Activated naive CD4-positive, alpha-beta T cell treated with anti-CD3 and anti-CD28 coated beads for 36 hours (primary cell): ENCODE measurements at regions of chr7 and their contacts with region 1.

Region 1: DNA sequence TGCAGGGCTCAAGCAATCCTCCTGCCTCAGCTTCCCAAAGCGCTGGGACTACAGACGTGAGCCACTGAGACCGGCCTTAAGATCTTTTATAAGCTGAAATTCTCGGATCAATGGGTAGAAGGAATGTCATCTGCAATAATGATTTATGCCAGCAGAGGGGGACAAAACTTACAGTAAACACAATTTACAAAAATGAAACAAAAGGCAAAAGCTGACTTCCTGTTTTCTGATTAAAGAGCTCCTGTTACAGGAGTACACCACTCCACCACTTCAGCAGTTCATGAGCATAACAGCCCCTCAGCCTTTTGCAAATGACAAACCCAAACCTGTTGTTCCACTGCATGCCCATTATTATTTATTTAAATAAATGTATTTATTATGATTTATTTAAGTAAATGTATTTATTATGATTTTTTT is 88.5 kb upstream of the ATP6V0A4 start:
- DNase-seq: peak; percentile 52
- H3K4me3 Mint-ChIP-seq: no peak overlapping the region
- H3K27ac Mint-ChIP-seq: peak overlapping the region; percentile 69
- H3K4me1 Mint-ChIP-seq: peaks cover 13% of the 10 kb centered on the region
- H3K27me3 Mint-ChIP-seq: no peaks in the 10 kb centered on the region

Region 2: GRCh38 chr7:138875794-138876193 is 10.7 kb before region 1 on chr7:
- CTCF ChIA-PET with region 1: interaction called, 15 read pairs
- intact Hi-C with region 1: no loop called
- DNase-seq: peak; percentile 81
- H3K4me3 Mint-ChIP-seq: no peak overlapping the region
- H3K27ac Mint-ChIP-seq: no peak overlapping the region
- H3K4me1 Mint-ChIP-seq: peaks cover 13% of the 10 kb centered on the region
- H3K27me3 Mint-ChIP-seq: no peaks in the 10 kb centered on the region

Region 3: DNA sequence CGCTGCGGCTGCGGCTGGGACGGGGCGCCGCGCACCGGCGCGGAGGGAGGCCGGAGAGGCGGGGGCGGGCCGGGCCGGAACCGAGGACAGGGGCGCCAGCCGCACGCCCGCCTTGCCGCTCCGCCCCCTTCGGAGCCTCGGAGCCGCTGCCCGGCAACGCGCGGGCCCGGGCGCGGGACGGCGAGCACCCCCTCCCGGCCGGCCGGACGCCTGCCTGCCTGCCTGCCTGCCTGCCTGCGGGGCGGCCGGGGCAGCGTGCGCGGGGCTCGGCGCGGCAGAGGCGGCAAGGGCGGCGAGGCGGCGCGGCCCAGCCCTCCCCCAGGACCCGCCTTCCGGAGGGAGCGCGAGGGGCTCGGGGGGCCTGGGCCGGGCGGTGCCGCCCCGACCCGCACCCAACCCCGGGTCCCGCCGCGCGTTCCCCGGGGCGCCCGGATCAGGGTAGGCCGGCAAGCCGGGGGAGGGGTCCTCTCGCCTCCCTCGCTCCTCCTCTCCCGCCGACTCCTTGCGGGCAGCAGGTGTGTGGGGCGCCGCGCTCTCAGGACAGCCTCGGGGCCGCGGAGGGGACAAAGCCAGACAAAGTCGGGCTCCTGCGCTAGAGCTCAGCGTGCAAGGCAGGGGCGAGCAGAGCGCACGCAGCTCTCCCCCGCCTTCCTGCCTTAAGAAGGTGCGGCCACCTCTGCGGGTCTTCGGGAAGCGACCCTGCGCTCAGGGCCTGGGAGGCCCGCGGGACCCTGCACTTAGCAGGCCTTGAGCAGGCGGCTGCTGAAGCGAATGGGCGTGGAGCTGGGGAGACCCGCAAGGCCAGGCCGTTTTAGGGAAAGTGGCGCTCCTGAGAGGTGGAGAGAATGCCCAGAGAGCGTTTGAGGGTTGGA is 95.1 kb after region 1 on chr7 and contains the start of gene KIAA1549:
- CTCF ChIA-PET with region 1: interaction called, 20 read pairs
- intact Hi-C with region 1: loop called (anchors 1 kb)
- DNase-seq: peak; percentile 59
- H3K4me3 Mint-ChIP-seq: peak within 1 kb of the TSS; percentile 80
- H3K27ac Mint-ChIP-seq: no peak within 1 kb of the TSS
- H3K4me1 Mint-ChIP-seq: peaks cover 8% of the 10 kb centered on the region
- H3K27me3 Mint-ChIP-seq: peaks cover 36% of the 10 kb centered on the region
- total RNA-seq, gene KIAA1549: 0.60 to 0.67 TPM

Region 4: DNA sequence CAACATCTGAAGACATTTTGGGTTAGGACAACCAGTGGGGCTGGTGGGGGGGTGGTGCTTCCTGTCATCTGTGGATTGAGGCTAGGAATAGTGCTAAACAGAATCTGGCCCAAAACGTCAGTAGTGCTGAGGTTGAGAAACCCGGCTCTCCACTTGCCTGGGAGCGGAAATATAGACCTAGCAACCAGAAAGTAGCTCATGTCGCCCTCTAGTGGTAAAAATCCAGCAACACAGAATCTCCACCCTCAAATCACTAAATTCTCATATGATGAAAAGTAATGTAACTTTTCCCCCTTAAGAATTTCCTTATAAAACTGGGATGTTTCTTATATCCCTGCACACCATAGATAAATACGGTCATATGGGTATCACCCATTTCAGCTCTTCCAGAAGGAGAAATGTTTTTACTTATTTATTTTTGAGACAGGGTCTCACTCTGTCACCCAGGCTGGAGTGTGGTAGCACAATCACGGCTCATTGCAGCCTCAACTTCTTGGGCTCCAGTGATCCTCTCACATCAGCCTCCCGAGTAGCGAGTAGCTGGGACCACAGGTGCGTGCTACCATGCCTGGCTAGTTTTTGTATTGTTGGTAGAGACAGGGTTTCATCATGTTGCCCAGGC is 188.6 kb after region 1 on chr7:
- CTCF ChIA-PET with region 1: interaction called, 18 read pairs
- intact Hi-C with region 1: loop called (anchors 1 kb)
- DNase-seq: peak; percentile 81
- H3K4me3 Mint-ChIP-seq: peak overlapping the region; percentile 11
- H3K27ac Mint-ChIP-seq: peak overlapping the region; percentile 84
- H3K4me1 Mint-ChIP-seq: peaks cover 60% of the 10 kb centered on the region
- H3K27me3 Mint-ChIP-seq: no peaks in the 10 kb centered on the region

Region 5: DNA sequence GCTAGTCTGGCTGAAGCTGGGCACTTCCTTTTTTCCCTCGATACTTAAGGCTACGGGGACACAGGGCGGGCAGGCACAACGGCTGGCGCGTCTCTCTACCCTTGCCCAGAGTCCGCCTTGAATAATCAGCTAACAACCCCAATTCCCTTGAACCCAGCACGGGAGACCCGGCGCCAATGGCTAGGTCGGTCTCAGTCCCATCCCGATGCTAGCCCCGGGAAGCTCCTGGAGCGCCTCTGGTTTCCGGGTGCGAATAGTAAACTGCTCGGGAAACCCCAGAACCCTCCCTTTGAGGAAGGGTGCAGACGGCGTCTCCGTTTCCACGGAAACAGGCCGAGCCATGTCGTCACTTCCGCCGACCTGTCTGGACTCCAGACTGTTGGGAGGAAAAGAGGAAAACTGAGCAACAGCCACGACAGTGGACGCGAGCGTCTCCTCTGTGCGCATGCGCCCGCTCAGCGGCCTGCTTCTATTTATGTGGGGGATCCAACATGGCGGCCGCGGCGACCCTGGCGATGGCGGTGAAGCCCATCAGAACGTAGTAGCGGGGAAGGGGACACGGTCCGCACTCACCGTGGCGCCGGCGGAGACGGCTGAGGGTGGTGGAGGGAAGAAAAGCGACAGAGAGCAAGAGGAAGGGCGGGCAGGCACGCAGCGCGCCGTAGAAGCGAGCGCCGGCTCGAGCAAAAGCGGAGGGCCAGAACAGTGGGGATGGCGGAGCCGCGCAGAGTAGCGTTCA is 344.4 kb after region 1 on chr7 and contains the start of gene UBN2:
- CTCF ChIA-PET with region 1: no interaction called
- intact Hi-C with region 1: loop called (anchors 5 kb)
- DNase-seq: peak; percentile 95
- H3K4me3 Mint-ChIP-seq: peak within 1 kb of the TSS; percentile 90
- H3K27ac Mint-ChIP-seq: peak within 1 kb of the TSS; percentile 75
- H3K4me1 Mint-ChIP-seq: peaks cover 20% of the 10 kb centered on the region
- H3K27me3 Mint-ChIP-seq: no peaks in the 10 kb centered on the region
- total RNA-seq, gene UBN2: 9.7 to 10.6 TPM